Vagina (tissue), 2 donors: ENCODE measurements at regions of chr9 and their contacts with region 1.

Region 1: GRCh38 chr9:115013998-115014397 is 83.6 kb upstream of the TNFSF8 start:
- DNase-seq: no peak
- H3K4me3 ChIP-seq: no peak overlapping the region
- H3K27ac ChIP-seq: no peak overlapping the region
- H3K4me1 ChIP-seq: no peaks in the 10 kb centered on the region
- H3K27me3 ChIP-seq: no peaks in the 10 kb centered on the region
- CTCF ChIP-seq: peak; percentile 65 to 89 (median 85)
- POLR2A ChIP-seq: no peak

Region 2: GRCh38 chr9:114413861-114414301 is 600.1 kb before region 1 on chr9:
- intact Hi-C with region 1: loop called (anchors 10 kb)
- DNase-seq: no peak
- H3K4me3 ChIP-seq: no peak overlapping the region
- H3K27ac ChIP-seq: no peak overlapping the region
- H3K4me1 ChIP-seq: peaks cover 14% of the 10 kb centered on the region
- H3K27me3 ChIP-seq: no peaks in the 10 kb centered on the region
- CTCF ChIP-seq: no peak
- POLR2A ChIP-seq: no peak

Region 3: GRCh38 chr9:114738581-114739316 is 275.2 kb before region 1 on chr9:
- intact Hi-C with region 1: loop called (anchors 2 kb)
- DNase-seq: no peak
- H3K4me3 ChIP-seq: no peak overlapping the region
- H3K27ac ChIP-seq: no peak overlapping the region
- H3K4me1 ChIP-seq: no peaks in the 10 kb centered on the region
- H3K27me3 ChIP-seq: no peaks in the 10 kb centered on the region
- CTCF ChIP-seq: peak; percentile 65 to 94 (median 78)
- POLR2A ChIP-seq: no peak

Region 4: DNA sequence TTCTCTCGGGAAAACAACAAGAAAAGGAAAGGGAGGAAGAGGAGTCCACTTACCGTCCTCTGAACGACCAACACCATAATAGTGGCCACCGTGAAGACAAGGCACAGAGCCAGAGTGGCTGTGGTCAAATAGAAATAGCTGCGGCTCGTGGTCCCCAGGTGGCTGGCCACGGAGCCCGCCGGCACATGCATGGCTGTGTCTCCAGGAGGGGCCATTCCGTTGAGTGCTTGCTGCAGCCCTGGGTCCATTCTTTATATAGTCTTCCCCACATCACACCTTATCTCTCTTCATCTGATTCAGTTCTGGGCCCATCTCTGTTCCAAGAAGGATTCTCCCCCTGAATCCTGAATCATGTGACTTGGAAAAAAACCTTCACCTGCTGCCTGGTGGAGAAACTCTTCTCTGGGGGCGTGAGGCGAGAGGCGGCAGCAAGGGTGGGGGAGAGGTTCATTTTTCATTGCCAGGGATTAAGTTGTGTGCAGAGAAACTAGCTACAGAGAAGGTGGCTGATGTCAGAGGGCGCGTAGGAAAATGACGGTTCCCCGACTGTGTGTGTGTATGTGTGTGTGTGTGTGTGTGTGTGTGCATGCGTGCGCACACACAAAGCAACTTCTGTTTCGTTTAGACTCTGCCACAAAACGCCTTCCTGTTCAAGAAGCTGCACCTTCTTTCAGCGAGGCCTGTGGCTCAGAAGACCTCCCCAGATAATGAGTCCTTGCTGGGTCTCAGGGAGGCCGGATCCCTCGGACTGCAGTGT is 83.8 kb before region 1 on chr9 and contains the start of gene TNFSF8:
- intact Hi-C with region 1: loop called (anchors 10 kb)
- DNase-seq: peak in 1 of 2 donors; percentile 64
- H3K4me3 ChIP-seq: peak within 1 kb of the TSS in 1 of 2 donors; percentile 25
- H3K27ac ChIP-seq: no peak within 1 kb of the TSS
- H3K4me1 ChIP-seq: no peaks in the 10 kb centered on the region
- H3K27me3 ChIP-seq: no peaks in the 10 kb centered on the region
- CTCF ChIP-seq: no peak
- POLR2A ChIP-seq: no peak
- total RNA-seq, gene TNFSF8: 4.2 TPM

Region 5: DNA sequence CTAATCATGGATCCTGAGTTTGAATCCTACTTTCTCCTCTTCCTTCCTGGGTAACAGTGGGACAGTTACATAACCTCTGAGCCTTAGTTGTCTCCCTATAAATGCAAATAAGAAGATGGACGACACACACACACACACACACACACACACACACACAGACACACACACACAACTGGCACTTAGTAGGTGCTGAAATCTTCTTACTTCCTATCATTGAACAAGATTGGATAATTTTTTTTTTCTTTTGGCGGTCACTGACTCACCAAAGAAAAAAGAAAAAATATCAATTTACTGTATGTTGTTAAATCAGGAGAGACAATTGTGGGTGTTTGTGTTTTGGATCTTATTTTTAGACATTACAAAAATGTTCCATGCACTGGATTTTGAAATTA is 55.2 kb before region 1 on chr9:
- intact Hi-C with region 1: no loop called
- DNase-seq: no peak
- H3K4me3 ChIP-seq: no peak overlapping the region
- H3K27ac ChIP-seq: no peak overlapping the region
- H3K4me1 ChIP-seq: peaks cover 6% of the 10 kb centered on the region
- H3K27me3 ChIP-seq: no peaks in the 10 kb centered on the region
- CTCF ChIP-seq: no peak
- POLR2A ChIP-seq: no peak